ENCODE measurements at regions of chr9 and their contacts with region 1.

Region 1: GRCh38 chr9:2241836-2242741 is 226.9 kb downstream of the SMARCA2 start:
- DNase-seq: peak; percentile 78
- H3K4me3 Mint-ChIP-seq: peak overlapping the region; percentile 77
- H3K27ac Mint-ChIP-seq: peak overlapping the region; percentile 83
- H3K4me1 Mint-ChIP-seq: peaks cover 36% of the 10 kb centered on the region
- H3K27me3 Mint-ChIP-seq: no peaks in the 10 kb centered on the region
- CTCF ChIP-seq: no peak

Region 2: GRCh38 chr9:2158111-2158610 is 83.9 kb before region 1 on chr9:
- CTCF ChIA-PET with region 1: no interaction called
- intact Hi-C with region 1: loop called (anchors 5 kb)
- DNase-seq: peak; percentile 20
- H3K4me3 Mint-ChIP-seq: peak overlapping the region; percentile 70
- H3K27ac Mint-ChIP-seq: peak overlapping the region; percentile 88
- H3K4me1 Mint-ChIP-seq: peaks cover 28% of the 10 kb centered on the region
- H3K27me3 Mint-ChIP-seq: no peaks in the 10 kb centered on the region
- CTCF ChIP-seq: no peak

Region 3: GRCh38 chr9:2291980-2292665 is 50.0 kb after region 1 on chr9:
- CTCF ChIA-PET with region 1: no interaction called
- intact Hi-C with region 1: loop called (anchors 10 kb)
- DNase-seq: peak; percentile 12
- H3K4me3 Mint-ChIP-seq: no peak overlapping the region
- H3K27ac Mint-ChIP-seq: peak overlapping the region; percentile 79
- H3K4me1 Mint-ChIP-seq: peaks cover 17% of the 10 kb centered on the region
- H3K27me3 Mint-ChIP-seq: no peaks in the 10 kb centered on the region
- CTCF ChIP-seq: no peak

Measured in Calu3 (cell line).